BJ (cell line): ENCODE measurements at regions of chr15 and their contacts with region 1.

Region 1: GRCh38 chr15:48336940-48337339 is 5.7 kb downstream of the DUT start:
- DNase-seq: no peak
- H3K4me3 ChIP-seq: no peak overlapping the region
- H3K27me3 ChIP-seq: no peaks in the 10 kb centered on the region
- CTCF ChIP-seq: peak; percentile 31

Region 2: DNA sequence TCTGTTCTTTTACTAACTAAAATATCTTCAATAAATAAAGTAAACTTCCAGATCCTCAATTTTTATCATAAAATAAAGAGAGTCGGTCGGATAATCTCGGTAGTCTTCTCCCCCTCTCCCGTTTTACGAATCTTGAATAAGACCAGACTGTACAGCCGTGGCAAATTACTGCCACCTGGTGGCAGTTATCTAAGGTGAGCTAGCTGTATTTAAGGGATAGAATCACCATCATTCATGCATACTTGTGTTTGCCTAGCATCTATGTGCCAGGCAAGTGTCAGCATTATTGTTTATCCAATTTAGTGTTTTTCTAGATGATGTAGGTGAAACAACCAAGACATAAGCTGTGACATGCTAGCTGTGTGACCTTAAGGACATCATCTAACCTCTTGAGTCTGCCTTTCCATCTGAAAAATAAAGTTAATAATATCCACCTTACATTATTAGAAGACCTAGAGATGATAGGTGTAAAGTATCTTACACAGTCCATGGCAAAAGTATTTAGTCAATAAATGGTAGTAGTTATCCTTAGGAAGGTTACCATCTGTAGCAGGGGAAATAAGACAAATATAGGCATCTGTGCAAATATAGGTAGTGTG is 15.6 kb after region 1 on chr15:
- CTCF ChIA-PET with region 1: interaction called, 14 read pairs
- POLR2A ChIA-PET with region 1: no interaction called
- DNase-seq: no peak
- H3K4me3 ChIP-seq: no peak overlapping the region
- H3K27me3 ChIP-seq: no peaks in the 10 kb centered on the region
- CTCF ChIP-seq: peak; percentile 74

Region 3: DNA sequence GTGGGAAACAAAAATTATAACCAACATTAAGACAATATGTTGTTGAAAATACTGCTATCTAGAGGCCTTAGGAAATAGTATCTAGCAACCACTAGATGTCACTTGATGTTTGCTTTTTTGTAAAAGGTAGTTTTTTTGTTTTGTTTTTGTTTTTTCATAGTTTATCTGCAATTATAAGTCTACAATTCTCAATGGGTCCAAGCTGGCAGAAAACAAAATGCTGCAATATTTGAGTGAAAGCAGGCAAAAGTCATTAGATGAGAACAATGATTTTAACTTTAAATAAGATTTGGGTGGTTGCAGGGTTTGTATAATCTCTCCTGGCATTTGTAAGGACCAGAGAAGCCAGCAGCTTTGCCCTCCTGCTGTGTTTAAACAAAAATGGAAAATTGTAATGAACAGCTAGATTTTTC is 21.3 kb after region 1 on chr15:
- CTCF ChIA-PET with region 1: interaction called, 10 read pairs
- POLR2A ChIA-PET with region 1: no interaction called
- DNase-seq: no peak
- H3K4me3 ChIP-seq: no peak overlapping the region
- H3K27me3 ChIP-seq: no peaks in the 10 kb centered on the region
- CTCF ChIP-seq: peak; percentile 58